Activated naive CD4-positive, alpha-beta T cell treated with anti-CD3 and anti-CD28 coated beads, Interleukin-2, amount 10 ng/mL, durations not matched to agents 7 days and 5 days (primary cell): ENCODE measurements at regions of chr19 and their contacts with region 1.

Region 1: GRCh38 chr19:43743022-43743421 is 11.7 kb downstream of the SMG9 start:
- DNase-seq: no peak
- H3K4me3 Mint-ChIP-seq: no peak overlapping the region
- H3K27ac Mint-ChIP-seq: no peak overlapping the region
- H3K4me1 Mint-ChIP-seq: peaks cover 29% of the 10 kb centered on the region
- H3K27me3 Mint-ChIP-seq: no peaks in the 10 kb centered on the region

Region 2: GRCh38 chr19:43606569-43607229 is 136.3 kb before region 1 on chr19:
- CTCF ChIA-PET with region 1: no interaction called
- DNase-seq: no peak
- H3K4me3 Mint-ChIP-seq: no peak overlapping the region
- H3K27ac Mint-ChIP-seq: no peak overlapping the region
- H3K4me1 Mint-ChIP-seq: peaks cover 2% of the 10 kb centered on the region
- H3K27me3 Mint-ChIP-seq: no peaks in the 10 kb centered on the region

Region 3: DNA sequence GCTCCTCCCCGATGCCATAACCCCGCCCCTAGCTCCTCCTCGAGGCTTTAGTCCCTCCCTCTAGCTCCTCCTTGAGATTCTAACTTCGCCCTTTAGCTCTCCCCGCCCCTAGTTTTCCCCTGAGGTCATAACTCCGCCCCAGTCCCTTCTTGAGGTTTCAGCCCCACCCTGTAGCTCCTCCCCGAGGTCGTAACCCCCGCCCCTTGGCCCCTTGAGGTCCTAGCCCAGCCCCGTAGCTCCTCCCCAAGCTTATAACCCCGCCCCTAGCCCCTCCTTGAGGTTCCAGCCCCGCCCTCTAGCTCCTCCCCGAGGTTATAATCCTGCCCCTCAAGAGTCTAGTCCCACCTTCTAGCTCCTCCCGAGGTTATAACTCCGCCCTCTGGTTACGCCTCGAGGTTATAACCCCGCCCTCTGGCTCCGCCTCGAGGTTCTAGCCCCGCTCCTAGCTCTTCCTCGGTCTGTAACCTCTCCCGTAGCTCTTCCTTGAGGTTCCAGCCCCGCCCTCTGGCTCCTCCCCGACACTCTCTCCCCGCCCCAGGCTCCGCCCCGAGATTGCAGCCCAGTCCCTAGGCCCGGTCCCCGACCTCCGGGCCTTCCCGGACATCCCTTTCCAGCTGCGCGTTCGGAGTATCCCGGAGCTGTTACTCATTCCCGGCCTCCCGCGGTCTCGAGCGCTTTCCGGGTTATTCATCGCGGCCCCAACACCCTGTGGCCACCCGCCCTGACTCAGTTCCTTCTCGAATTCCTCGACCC is 74.4 kb before region 1 on chr19:
- CTCF ChIA-PET with region 1: interaction called, 29 read pairs
- DNase-seq: peak; percentile 99
- H3K4me3 Mint-ChIP-seq: peak overlapping the region; percentile 79
- H3K27ac Mint-ChIP-seq: peak overlapping the region; percentile 71
- H3K4me1 Mint-ChIP-seq: peaks cover 56% of the 10 kb centered on the region
- H3K27me3 Mint-ChIP-seq: peaks cover 37% of the 10 kb centered on the region

Region 4: DNA sequence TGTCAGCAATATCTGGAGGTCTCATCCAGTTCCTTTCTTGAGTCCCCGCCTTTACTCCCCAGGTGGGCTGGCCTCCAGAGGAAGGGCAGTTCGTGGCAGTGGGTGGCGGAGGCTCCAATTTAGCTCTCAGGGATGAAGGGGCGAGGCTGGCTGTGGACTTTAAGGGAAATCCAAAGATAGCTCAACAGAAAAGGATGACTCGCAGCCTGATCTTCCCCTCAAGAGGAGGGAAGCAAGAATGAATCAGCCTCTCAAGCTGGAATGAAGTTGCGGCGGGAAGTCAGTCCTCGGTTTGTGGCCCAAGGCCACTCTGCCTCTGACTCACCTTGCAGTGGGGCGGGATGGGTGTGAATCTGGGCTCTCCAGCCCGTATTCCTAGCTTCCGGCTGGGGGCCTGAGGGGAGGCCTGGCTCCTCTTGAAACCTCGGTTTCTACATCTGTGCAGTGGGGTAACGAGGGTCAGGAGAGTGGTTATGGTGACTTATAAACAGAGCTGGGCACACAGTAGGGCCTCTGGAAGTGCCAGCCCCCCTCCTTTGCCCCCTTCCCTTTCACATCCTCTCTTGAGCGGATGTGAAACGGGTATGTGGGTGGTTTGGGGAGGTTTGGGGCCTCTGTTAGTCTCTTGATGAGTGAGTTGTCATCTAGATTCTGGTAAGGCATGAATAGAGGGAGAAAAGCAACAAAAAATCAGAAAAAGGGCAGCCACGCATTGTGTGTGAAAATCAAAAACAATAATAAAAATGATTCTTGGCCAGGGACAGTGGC is 22.3 kb after region 1 on chr19:
- CTCF ChIA-PET with region 1: interaction called, 44 read pairs
- DNase-seq: peak; percentile 82
- H3K4me3 Mint-ChIP-seq: peak overlapping the region; percentile 37
- H3K27ac Mint-ChIP-seq: peak overlapping the region; percentile 91
- H3K4me1 Mint-ChIP-seq: peaks cover 52% of the 10 kb centered on the region
- H3K27me3 Mint-ChIP-seq: no peaks in the 10 kb centered on the region

Region 5: GRCh38 chr19:43784981-43785808 is 42.2 kb after region 1 on chr19:
- CTCF ChIA-PET with region 1: interaction called, 35 read pairs
- DNase-seq: peak; percentile 65
- H3K4me3 Mint-ChIP-seq: peak overlapping the region; percentile 2
- H3K27ac Mint-ChIP-seq: peak overlapping the region; percentile 89
- H3K4me1 Mint-ChIP-seq: peaks cover 47% of the 10 kb centered on the region
- H3K27me3 Mint-ChIP-seq: peaks cover 6% of the 10 kb centered on the region

Region 6: GRCh38 chr19:43806848-43807247 is 63.8 kb after region 1 on chr19:
- CTCF ChIA-PET with region 1: interaction called, 12 read pairs
- DNase-seq: no peak
- H3K4me3 Mint-ChIP-seq: no peak overlapping the region
- H3K27ac Mint-ChIP-seq: no peak overlapping the region
- H3K4me1 Mint-ChIP-seq: no peaks in the 10 kb centered on the region
- H3K27me3 Mint-ChIP-seq: peaks cover 43% of the 10 kb centered on the region